PC-9 (cell line): ENCODE measurements at regions of chr19 and their contacts with region 1.

Region 1: DNA sequence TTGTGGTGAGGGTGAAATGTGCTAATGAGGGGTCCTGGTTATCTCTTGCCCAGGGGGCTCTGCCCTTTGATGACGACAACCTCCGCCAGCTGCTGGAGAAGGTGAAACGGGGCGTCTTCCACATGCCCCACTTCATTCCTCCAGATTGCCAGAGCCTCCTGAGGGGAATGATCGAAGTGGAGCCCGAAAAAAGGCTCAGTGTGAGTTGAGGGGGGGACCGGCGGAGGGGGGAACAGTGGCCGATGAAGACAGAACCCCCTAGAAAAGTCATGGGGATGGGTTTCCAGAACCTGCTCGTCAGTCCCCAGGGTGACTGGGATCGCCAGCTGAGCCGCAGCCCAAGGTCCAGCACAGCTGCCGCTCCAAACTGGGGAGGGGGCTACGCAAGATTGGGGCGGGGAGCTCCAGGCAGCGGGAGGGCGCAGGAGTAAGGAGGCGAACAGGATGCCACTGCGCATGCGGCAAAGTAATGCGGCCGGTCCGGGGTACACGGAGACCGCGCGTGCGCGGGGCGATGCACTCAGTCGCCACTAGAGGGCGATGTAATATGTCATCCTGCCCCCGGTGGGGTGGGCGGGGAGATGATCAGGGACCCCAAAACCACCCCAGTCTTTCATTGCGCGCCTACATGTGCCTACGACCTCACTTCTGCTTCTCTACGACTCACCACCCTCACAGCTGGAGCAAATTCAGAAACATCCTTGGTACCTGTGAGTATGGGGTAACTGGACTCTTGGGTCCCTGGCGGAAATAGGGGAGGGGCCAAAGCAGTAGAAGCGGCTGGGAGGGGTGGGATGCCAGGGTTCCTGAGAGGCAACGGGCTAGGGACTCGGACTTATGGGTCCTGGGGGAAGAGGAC is 17.9 kb downstream of the BRSK1 start:
- DNase-seq: peak; percentile 49 to 94
- H3K4me3 ChIP-seq: peak overlapping the region; percentile 55
- H3K27ac ChIP-seq: no peak overlapping the region
- H3K4me1 ChIP-seq: 0 out of 2 replicates have a peak, but pooled peaks cover 4% of the 10 kb centered on the region
- H3K27me3 ChIP-seq: no peaks in the 10 kb centered on the region
- CTCF ChIP-seq: peak; percentile 100

Region 2: DNA sequence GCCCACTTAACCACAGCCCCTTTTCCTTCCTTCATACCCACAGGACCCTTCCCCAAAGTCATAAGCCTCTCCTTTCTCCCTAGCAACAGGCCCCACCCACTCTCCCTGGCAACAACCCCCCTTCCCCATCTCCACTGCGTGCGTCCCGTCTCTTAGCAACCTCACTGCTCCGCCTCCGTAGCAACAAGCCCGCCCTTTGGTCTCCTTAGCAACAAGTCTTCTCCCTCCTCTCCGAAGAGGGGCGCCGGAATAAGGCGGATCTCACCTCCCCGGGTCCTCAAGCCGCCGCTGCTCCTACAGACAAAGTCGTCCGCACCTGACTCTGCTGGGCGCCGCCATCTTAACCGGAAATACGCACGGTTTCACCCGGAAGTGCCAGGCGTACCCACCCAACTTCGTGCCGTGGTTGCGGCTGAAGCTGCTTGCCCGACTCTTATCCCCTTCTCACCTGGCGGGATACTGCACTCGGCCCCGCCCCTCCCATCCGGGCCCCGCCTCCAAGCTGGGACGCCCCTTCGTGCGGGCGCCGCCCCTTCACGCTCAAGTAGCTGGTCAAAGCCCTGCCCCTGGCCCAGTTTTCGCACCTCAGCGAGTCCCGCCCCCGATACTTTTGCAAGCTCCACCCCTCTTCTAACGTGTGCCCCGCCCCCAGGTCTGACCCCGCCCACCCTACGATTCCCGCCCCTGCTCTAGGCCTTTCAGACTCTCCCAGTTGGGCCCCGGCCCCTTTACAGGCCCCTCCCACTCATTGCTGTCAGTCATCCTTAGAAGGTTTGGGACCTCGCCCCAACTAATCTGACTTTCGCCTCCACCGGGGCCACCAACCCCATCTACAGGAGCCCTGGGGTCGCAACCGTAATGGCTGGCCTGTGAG is 21.7 kb before region 1 on chr19 and contains the start of gene HSPBP1:
- CTCF ChIA-PET with region 1: interaction called, 16 read pairs
- POLR2A ChIA-PET with region 1: no interaction called
- intact Hi-C with region 1: no loop called
- DNase-seq: peak; percentile 94 to 100
- H3K4me3 ChIP-seq: peak within 1 kb of the TSS; percentile 94
- H3K27ac ChIP-seq: peak within 1 kb of the TSS; percentile 72
- H3K4me1 ChIP-seq: peaks cover 8% of the 10 kb centered on the region; the same call in 1 of the 2 replicates
- H3K27me3 ChIP-seq: peaks cover 4% of the 10 kb centered on the region; the same call in 1 of the 2 replicates
- CTCF ChIP-seq: no peak
- total RNA-seq, gene HSPBP1: 66.2 and 79.6 TPM in 2 replicates

Region 3: DNA sequence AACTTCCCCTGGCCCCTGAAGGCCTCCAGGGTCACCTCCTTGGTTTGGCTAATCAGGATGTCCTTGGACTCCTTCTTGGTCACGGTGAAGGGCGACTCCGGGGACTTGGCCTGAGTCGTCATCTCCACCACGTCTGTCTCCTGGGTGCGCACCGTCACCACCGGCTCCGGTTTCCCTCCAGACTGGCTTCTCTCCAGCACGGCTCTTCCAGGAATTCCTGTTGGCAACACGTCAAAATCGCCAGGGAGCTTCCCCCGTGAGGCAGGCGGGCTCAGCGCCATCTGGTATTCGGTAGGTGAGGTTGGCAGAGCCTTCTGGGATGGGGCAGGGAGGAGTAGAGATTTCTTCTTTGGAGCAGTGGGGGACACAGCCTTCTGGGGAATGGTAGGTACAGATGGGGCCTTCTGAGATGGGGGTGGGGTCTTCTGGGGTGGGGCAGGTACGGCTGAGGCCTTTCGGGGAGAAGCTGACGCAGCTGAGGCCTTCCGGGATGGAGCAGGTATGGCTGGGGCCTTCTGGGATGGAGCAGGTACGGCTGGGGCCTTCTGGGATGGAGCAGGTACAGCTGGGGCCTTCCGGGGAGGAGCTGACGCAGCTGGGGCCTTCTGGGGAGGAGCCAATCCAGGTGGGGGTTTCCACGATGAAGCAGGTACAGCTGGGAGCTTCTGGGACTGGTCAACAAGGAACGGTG is 57.4 kb after region 1 on chr19:
- CTCF ChIA-PET with region 1: no interaction called
- POLR2A ChIA-PET with region 1: no interaction called
- intact Hi-C with region 1: no loop called
- DNase-seq: no peak
- H3K4me3 ChIP-seq: no peak overlapping the region
- H3K27ac ChIP-seq: no peak overlapping the region
- H3K4me1 ChIP-seq: peaks cover 7% of the 10 kb centered on the region; the same call in 1 of the 2 replicates
- H3K27me3 ChIP-seq: peaks cover 5% of the 10 kb centered on the region
- CTCF ChIP-seq: no peak

Region 4: DNA sequence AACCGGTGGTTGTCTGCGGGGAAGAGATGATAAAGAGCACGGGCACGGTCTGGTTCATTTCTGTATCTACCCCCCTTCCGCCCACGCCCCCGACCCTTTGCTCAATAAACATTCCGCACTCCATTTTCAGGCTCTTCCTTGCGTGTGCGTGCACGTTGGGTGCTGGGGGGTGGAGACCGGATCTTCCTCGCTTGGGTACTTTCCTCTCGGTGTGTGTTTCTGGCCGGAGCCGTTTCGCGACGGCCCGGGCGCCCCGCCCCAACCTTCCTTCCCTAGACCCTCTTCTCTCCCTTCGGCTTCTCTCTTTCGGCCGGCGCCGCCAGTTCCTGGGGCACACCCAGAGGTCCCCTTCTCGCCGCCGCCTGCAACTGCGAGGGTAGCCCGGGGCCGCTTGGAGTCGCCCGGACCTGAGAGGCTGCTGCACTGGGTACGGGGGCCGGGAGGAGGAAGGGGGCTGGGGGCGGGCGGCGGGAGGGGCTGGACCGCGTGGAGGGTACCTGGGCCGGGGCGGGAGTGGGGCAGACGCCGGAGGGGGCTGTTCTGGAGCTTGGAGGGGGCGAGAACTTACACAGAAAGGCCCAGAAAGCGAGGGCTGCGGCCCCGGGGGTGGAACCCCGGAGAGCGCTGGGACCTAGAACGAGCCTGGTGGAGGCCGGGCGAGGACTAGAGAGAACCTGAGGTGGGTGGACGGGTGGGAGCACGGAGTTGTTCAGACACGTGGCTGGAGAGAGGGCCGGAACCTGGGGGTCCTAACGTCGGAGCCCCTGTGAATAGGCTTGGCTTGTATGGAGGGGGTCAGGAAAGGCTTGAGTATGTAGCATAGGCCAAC is 341.9 kb after region 1 on chr19 and contains the start of gene ZNF581:
- CTCF ChIA-PET with region 1: no interaction called
- POLR2A ChIA-PET with region 1: no interaction called
- intact Hi-C with region 1: no loop called
- DNase-seq: peak; percentile 66 to 79
- H3K4me3 ChIP-seq: peak within 1 kb of the TSS; percentile 66
- H3K27ac ChIP-seq: peak within 1 kb of the TSS; percentile 44
- H3K4me1 ChIP-seq: peaks cover 8% of the 10 kb centered on the region
- H3K27me3 ChIP-seq: no peaks in the 10 kb centered on the region
- CTCF ChIP-seq: no peak
- total RNA-seq, gene ZNF581: 53.5 and 81.9 TPM in 2 replicates